ENCODE measurements at regions of chrX and their contacts with region 1.

Region 1: DNA sequence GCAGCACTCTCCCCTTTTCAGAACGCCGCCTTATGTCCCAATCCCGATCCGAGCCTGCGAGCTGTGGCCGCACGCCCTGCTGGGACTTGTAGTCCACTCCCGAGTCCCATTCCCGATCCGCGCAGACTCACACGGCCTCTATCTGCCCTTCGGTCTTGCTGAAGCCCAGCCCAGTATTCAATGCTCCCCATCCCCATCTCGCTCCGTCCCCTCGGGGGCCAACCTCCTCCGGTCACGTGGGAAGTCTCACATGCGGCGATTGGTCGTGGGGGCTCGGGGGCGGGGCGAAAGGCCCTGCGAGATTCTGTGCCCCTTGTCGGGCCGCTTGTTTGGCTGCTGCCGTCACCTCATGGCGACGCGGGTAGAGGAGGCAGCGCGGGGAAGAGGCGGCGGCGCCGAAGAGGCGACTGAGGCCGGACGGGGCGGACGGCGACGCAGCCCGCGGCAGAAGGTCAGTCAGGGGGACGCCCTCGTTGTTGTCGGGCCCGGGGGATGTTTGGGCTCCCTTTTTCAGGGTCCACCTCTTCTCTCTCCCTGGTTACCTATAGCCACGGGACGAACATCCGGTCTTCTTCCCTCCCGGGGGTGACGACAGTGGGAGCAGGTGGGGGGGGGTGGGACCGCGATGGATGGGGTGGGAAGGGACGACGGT is at the start of gene TXLNG:
- DNase-seq: peak; percentile 94 to 100 (median 100)

Region 2: GRCh38 chrX:15674841-15675489 is 1111.3 kb before region 1 on chrX:
- intact Hi-C with region 1: loop called (anchors 10 kb)
- DNase-seq: peak; percentile 77 to 98 (median 90)

Region 3: DNA sequence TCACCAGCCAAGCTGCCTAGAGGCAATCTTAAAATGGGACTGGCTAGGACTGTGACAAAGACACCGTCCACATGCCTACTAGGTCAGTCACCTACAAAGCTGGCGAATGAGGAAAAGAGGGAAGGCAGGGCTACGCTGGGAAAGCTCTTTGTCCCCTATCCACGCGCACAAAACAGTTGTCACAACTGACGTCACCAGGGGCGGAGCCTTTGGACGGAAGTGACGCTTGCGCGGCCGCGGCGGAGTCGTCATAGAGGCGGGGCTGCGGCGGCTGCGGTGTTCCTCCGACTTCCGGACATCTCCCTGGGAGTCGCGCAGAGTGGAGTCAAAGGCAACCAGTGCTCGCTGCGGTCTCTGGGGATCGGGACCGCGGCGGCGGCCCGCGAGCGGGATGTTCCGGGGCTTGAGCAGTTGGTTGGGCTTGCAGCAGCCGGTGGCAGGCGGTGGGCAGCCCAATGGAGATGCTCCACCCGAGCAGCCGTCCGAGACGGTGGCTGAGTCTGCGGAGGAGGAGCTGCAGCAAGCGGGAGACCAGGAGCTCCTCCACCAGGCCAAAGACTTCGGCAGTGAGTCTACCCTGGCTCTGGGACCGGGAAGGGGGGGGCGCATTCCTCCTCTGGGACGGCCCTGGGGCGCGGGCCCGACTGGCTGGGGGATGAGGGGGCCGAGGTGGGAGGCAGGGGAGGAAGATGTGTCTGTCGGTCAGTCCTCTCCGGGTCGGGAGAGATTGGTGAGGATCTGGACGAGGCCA is 66.8 kb before region 1 on chrX and contains the start of gene SYAP1:
- intact Hi-C with region 1: loop called (anchors 1 kb)
- DNase-seq: peak; percentile 92 to 100 (median 97)